Activated CD4-positive, alpha-beta memory T cell treated with anti-CD3 and anti-CD28 coated beads, Interleukin-2, amount 10 ng/mL, durations not matched to agents 7 days and 5 days (primary cell): ENCODE measurements at regions of chr2 and their contacts with region 1.

Region 1: DNA sequence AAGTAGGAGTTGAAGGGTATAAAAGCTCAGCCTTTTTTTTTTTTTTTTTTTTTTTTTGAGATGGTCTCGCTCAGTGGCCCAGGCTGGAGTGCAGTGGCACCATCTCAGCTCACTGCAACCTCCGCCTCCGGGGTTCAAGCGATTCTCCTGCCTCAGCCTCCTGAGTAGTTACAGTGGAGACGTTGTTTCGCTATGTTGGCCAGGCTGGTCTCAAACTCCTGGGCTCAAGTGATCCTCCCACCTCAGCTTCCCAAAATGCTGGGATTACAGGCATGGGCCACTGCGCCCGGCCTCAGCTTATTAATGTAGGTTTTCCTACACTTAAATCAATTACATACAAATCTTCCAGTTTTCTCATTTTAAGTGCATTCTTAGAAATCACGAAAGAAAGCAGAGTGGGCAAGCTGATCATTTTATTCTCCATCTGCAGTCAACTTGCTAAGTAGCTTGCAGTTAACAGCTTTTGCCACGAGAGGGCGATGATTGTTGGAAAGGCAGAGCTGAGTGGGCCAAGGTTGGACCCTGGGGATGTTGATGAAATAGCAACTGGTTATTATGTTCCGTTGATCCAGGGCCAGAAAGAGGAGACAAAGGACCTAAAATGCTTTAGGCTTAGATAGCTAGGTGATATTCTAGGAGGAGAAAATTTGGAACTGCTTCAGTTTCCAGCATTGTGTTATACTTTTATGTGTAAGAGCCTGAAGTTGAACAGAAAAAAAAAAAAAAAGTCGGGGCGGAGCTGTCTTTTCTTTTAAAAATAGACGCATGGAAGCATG is 234.4 kb upstream of the EPAS1 start:
- DNase-seq: peak; percentile 79
- H3K4me3 Mint-ChIP-seq: no peak overlapping the region
- H3K27ac Mint-ChIP-seq: no peak overlapping the region
- H3K4me1 Mint-ChIP-seq: peaks cover 28% of the 10 kb centered on the region
- H3K27me3 Mint-ChIP-seq: no peaks in the 10 kb centered on the region

Region 2: GRCh38 chr2:46010925-46011490 is 51.8 kb before region 1 on chr2:
- CTCF ChIA-PET with region 1: interaction called, 19 read pairs
- POLR2A ChIA-PET with region 1: no interaction called
- DNase-seq: peak; percentile 10
- H3K4me3 Mint-ChIP-seq: no peak overlapping the region
- H3K27ac Mint-ChIP-seq: peak overlapping the region; percentile 2
- H3K4me1 Mint-ChIP-seq: peaks cover 54% of the 10 kb centered on the region
- H3K27me3 Mint-ChIP-seq: no peaks in the 10 kb centered on the region

Region 3: GRCh38 chr2:46029332-46029811 is 33.5 kb before region 1 on chr2:
- CTCF ChIA-PET with region 1: interaction called, 15 read pairs
- POLR2A ChIA-PET with region 1: no interaction called
- DNase-seq: no peak
- H3K4me3 Mint-ChIP-seq: no peak overlapping the region
- H3K27ac Mint-ChIP-seq: no peak overlapping the region
- H3K4me1 Mint-ChIP-seq: peaks cover 51% of the 10 kb centered on the region
- H3K27me3 Mint-ChIP-seq: no peaks in the 10 kb centered on the region

Region 4: GRCh38 chr2:46079996-46080560 is 17.3 kb after region 1 on chr2:
- CTCF ChIA-PET with region 1: interaction called, 11 read pairs
- POLR2A ChIA-PET with region 1: no interaction called
- DNase-seq: no peak
- H3K4me3 Mint-ChIP-seq: no peak overlapping the region
- H3K27ac Mint-ChIP-seq: peak overlapping the region; percentile 74
- H3K4me1 Mint-ChIP-seq: peaks cover 51% of the 10 kb centered on the region
- H3K27me3 Mint-ChIP-seq: no peaks in the 10 kb centered on the region

Region 5: GRCh38 chr2:46134531-46135181 is 71.8 kb after region 1 on chr2:
- CTCF ChIA-PET with region 1: no interaction called
- POLR2A ChIA-PET with region 1: no interaction called
- DNase-seq: no peak
- H3K4me3 Mint-ChIP-seq: no peak overlapping the region
- H3K27ac Mint-ChIP-seq: no peak overlapping the region
- H3K4me1 Mint-ChIP-seq: no peaks in the 10 kb centered on the region
- H3K27me3 Mint-ChIP-seq: no peaks in the 10 kb centered on the region

Region 6: DNA sequence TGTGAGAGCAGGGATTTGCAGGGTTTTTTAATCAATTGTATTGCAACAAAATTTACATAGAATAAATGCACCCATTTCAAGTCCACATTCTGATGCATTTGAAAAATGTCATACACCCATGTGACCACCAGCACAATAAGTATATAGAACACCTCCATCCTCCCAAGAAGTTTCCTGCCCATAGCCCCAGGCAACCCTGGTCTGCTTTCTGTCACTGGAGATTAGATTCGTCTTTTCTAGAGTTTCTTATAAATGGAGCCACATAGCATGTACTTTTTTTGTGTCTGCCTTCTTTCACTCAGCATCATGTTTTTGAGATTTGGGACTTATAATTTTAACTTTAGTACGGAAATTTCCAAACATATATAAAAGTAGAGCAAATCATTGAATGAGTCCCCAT is 107.2 kb after region 1 on chr2:
- CTCF ChIA-PET with region 1: no interaction called
- POLR2A ChIA-PET with region 1: no interaction called
- DNase-seq: no peak
- H3K4me3 Mint-ChIP-seq: no peak overlapping the region
- H3K27ac Mint-ChIP-seq: no peak overlapping the region
- H3K4me1 Mint-ChIP-seq: no peaks in the 10 kb centered on the region
- H3K27me3 Mint-ChIP-seq: no peaks in the 10 kb centered on the region

Region 7: GRCh38 chr2:46364797-46365457 is 302.1 kb after region 1 on chr2:
- CTCF ChIA-PET with region 1: interaction called, 38 read pairs
- POLR2A ChIA-PET with region 1: no interaction called
- DNase-seq: peak; percentile 41
- H3K4me3 Mint-ChIP-seq: no peak overlapping the region
- H3K27ac Mint-ChIP-seq: no peak overlapping the region
- H3K4me1 Mint-ChIP-seq: peaks cover 56% of the 10 kb centered on the region
- H3K27me3 Mint-ChIP-seq: no peaks in the 10 kb centered on the region